B cell (primary cell): ENCODE measurements at regions of chr1 and their contacts with region 1.

Region 1: GRCh38 chr1:11681071-11681771 is at the start of gene MAD2L2:
- DNase-seq: peak; percentile 92
- ATAC-seq: peak; percentile 94
- H3K4me3 ChIP-seq: peak within 1 kb of the TSS; percentile 46 to 96 (median 89)
- H3K4me3 Mint-ChIP-seq: peak within 1 kb of the TSS; percentile 92
- H3K27ac ChIP-seq: peak within 1 kb of the TSS; percentile 51 to 77
- H3K27ac Mint-ChIP-seq: peak within 1 kb of the TSS; percentile 94
- H3K4me1 ChIP-seq: peaks cover 11 to 20% of the 10 kb centered on the region in 2 donors
- H3K4me1 Mint-ChIP-seq: peaks cover 20% of the 10 kb centered on the region
- H3K27me3 ChIP-seq: peaks cover 0 to 4% (median 0%) of the 10 kb centered on the region in 4 experiments
- H3K27me3 Mint-ChIP-seq: no peaks in the 10 kb centered on the region
- CTCF ChIP-seq: no peak
- total RNA-seq, gene MAD2L2: 27.7 and 29.0 TPM in 2 replicates

Region 2: DNA sequence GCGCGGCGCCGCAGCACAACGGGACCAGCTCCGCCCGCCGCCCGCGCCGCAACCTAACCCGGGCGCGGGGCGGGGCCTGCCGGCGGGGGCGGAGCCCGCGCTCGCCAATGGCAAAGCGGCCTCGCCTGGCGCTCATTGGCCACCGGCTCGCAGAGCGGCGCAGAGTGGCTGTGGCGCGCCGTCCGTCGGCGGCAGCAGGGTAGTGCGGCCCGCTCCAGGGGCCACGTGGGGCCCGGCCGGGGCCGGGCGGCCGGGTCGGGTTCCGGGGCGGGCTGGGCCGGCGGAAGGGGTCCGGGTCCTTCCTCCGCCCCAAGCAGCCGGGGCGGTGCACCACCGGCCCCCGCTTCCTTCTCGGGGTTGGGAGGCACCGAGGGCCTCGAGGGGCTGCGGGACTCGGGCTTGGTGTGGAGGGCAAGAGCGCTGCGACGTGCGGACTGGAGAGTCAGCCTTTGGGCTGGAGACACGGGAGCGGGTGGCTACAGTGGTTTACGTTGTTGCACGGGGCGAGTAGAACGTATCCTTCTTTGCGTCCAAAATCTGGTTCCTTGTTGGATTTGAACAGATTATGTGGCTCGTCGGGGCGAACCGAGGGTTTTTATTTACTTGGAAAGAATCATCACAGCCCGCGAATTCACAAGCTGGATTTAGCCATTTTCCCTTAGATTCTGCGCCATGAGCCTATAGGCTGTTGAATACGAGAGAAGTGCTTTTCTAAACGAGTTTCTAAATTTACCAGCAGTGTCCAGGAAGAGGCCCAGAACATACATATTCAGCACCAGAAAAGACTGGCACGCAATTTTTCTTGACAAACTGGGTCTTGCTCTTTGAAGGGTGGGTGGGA is 621.0 kb before region 1 on chr1 and contains the start of gene SRM:
- CTCF ChIA-PET with region 1: no interaction called
- POLR2A ChIA-PET with region 1: no interaction called
- intact Hi-C with region 1: loop called (anchors 1 kb)
- DNase-seq: peak; percentile 93
- ATAC-seq: peak; percentile 98
- H3K4me3 ChIP-seq: peak within 1 kb of the TSS; percentile 73 to 93 (median 79)
- H3K4me3 Mint-ChIP-seq: peak within 1 kb of the TSS; percentile 98
- H3K27ac ChIP-seq: peak within 1 kb of the TSS; percentile 43 to 65
- H3K27ac Mint-ChIP-seq: peak within 1 kb of the TSS; percentile 92
- H3K4me1 ChIP-seq: peaks cover 16 to 19% of the 10 kb centered on the region in 2 donors
- H3K4me1 Mint-ChIP-seq: peaks cover 25% of the 10 kb centered on the region
- H3K27me3 ChIP-seq: no peaks in the 10 kb centered on the region
- H3K27me3 Mint-ChIP-seq: no peaks in the 10 kb centered on the region
- CTCF ChIP-seq: peak; percentile 37
- total RNA-seq, gene SRM: 38.9 and 39.4 TPM in 2 replicates

Region 3: GRCh38 chr1:11434506-11434905 is 246.7 kb before region 1 on chr1:
- CTCF ChIA-PET with region 1: no interaction called
- POLR2A ChIA-PET with region 1: no interaction called
- intact Hi-C with region 1: no loop called
- DNase-seq: no peak
- ATAC-seq: no peak
- H3K4me3 ChIP-seq: no peak overlapping the region
- H3K4me3 Mint-ChIP-seq: no peak overlapping the region
- H3K27ac ChIP-seq: no peak overlapping the region
- H3K27ac Mint-ChIP-seq: no peak overlapping the region
- H3K4me1 ChIP-seq: no peaks in the 10 kb centered on the region
- H3K4me1 Mint-ChIP-seq: no peaks in the 10 kb centered on the region
- H3K27me3 ChIP-seq: peaks cover 0 to 4% (median 0%) of the 10 kb centered on the region in 4 experiments
- H3K27me3 Mint-ChIP-seq: peaks cover 10% of the 10 kb centered on the region
- CTCF ChIP-seq: no peak

Region 4: DNA sequence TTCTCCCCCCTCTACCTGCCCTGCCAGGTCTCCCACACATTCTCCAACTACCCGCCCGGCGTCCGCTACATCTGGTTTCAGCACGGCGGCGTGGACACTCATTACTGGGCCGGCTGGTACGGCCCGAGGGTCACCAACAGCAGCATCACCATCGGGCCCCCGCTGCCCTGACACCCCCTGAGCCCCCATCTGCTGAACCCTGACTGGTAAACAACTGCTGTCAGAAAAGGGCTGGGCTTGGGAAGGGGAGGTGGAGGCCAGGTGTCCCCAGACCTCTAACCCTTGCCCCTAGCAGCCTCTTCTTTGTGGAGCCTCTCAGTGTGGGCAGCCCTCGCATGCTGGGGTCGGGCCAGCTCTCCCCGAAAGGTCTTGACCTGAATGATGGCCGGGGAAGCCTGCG is 20.1 kb before region 1 on chr1:
- CTCF ChIA-PET with region 1: interaction called, 23 read pairs
- POLR2A ChIA-PET with region 1: interaction called, 20 read pairs
- intact Hi-C with region 1: loop called (anchors 1 kb)
- DNase-seq: no peak
- ATAC-seq: no peak
- H3K4me3 ChIP-seq: no peak overlapping the region
- H3K4me3 Mint-ChIP-seq: no peak overlapping the region
- H3K27ac ChIP-seq: no peak overlapping the region
- H3K27ac Mint-ChIP-seq: no peak overlapping the region
- H3K4me1 ChIP-seq: peaks cover 0 to 9% of the 10 kb centered on the region in 2 donors
- H3K4me1 Mint-ChIP-seq: peaks cover 3% of the 10 kb centered on the region
- H3K27me3 ChIP-seq: no peaks in the 10 kb centered on the region
- H3K27me3 Mint-ChIP-seq: no peaks in the 10 kb centered on the region
- CTCF ChIP-seq: no peak

Region 5: GRCh38 chr1:11730429-11730891 is 49.2 kb after region 1 on chr1:
- CTCF ChIA-PET with region 1: interaction called, 3 read pairs
- POLR2A ChIA-PET with region 1: no interaction called
- intact Hi-C with region 1: loop called (anchors 1 kb)
- DNase-seq: peak; percentile 76
- ATAC-seq: peak; percentile 87
- H3K4me3 ChIP-seq: peak overlapping the region; percentile 32 to 73 (median 44)
- H3K4me3 Mint-ChIP-seq: peak overlapping the region; percentile 89
- H3K27ac ChIP-seq: peak overlapping the region; percentile 69 to 84
- H3K27ac Mint-ChIP-seq: peak overlapping the region; percentile 96
- H3K4me1 ChIP-seq: peaks cover 36 to 41% of the 10 kb centered on the region in 2 donors
- H3K4me1 Mint-ChIP-seq: peaks cover 34% of the 10 kb centered on the region
- H3K27me3 ChIP-seq: no peaks in the 10 kb centered on the region
- H3K27me3 Mint-ChIP-seq: no peaks in the 10 kb centered on the region
- CTCF ChIP-seq: no peak